CD4-positive, alpha-beta memory T cell (primary cell): ENCODE measurements at regions of chr5 and their contacts with region 1.

Region 1: GRCh38 chr5:132820162-132820754 is 7.2 kb downstream of the SOWAHA start:
- DNase-seq: peak; percentile 78 to 84 (median 81)
- H3K4me3 ChIP-seq: no peak overlapping the region
- H3K4me3 Mint-ChIP-seq: peak overlapping the region in 5 of 8 donors; percentile 6 to 69 (median 49)
- H3K27ac ChIP-seq: no peak overlapping the region
- H3K27ac Mint-ChIP-seq: peak overlapping the region in 2 of 7 donors; percentile 3 to 51
- H3K4me1 ChIP-seq: peaks cover 11% of the 10 kb centered on the region
- H3K4me1 Mint-ChIP-seq: peaks cover 2 to 14% (median 7%) of the 10 kb centered on the region in 4 donors
- H3K27me3 ChIP-seq: peaks cover 15% of the 10 kb centered on the region
- H3K27me3 Mint-ChIP-seq: peaks cover 15 to 17% of the 10 kb centered on the region in 2 donors

Region 2: GRCh38 chr5:132293066-132293991 is 526.9 kb before region 1 on chr5:
- CTCF ChIA-PET with region 1: no interaction called
- POLR2A ChIA-PET with region 1: no interaction called
- intact Hi-C with region 1: loop called (anchors 10 kb)
- DNase-seq: peak; percentile 36 to 78 (median 39)
- H3K4me3 ChIP-seq: peak overlapping the region; percentile 32 to 61
- H3K4me3 Mint-ChIP-seq: peak overlapping the region; percentile 82 to 92 (median 90)
- H3K27ac ChIP-seq: peak overlapping the region; percentile 45
- H3K27ac Mint-ChIP-seq: peak overlapping the region in 5 of 7 donors; percentile 22 to 82 (median 57)
- H3K4me1 ChIP-seq: peaks cover 18% of the 10 kb centered on the region
- H3K4me1 Mint-ChIP-seq: peaks cover 7 to 22% (median 10%) of the 10 kb centered on the region in 4 donors
- H3K27me3 ChIP-seq: no peaks in the 10 kb centered on the region
- H3K27me3 Mint-ChIP-seq: peaks cover 11 to 16% of the 10 kb centered on the region in 2 donors

Region 3: DNA sequence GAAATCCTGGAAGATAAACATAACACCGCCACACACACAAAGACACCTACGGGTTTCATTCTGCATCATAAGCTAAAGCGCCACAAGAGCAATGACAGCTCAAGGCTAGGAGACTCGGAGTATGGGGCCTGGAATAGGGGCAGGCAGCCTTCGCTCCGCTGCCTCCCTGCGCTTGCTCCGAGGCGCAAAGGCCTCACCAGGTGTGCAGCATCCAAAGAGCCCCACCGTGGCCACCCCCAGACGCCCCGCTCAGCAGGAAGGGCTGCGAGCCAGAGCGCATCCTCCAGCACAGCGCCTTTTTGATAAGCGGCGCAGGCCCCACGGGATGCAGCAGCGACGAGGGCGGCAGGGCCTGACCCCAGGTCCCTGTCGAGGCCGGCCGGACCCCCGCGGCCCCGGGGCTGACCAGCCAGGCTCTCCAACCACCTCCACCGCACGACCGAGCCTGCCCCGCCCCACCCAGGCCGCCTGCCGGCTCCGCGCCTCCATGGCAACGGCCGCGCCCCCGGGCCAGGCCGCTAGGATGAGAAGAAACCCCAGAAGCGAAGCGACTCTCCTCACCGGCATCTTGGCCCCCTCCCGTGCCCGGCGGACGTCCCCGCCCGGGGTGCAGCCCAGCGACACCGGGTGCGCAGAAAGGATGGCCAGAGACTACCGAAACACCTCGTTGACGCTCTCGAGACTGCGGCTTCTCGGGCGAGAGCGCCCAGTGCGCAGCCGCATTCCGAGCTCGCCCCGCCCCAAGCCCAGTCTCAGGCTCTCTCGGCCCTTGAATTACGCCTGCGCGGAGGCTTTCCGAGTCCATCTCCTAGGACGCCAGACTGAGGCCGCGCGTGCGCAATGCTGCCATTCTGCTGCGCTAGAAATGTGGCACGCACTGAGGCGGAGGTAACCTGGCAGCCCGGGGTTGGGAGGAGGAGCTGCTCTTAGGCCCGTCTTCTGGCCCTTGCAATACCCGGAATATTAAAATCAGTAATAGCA is 83.1 kb before region 1 on chr5 and contains the start of gene KIF3A:
- CTCF ChIA-PET with region 1: interaction called, 17 read pairs
- POLR2A ChIA-PET with region 1: interaction called, 5 read pairs
- intact Hi-C with region 1: loop called (anchors 2 kb)
- DNase-seq: peak; percentile 98
- H3K4me3 ChIP-seq: peak within 1 kb of the TSS; percentile 63 to 79
- H3K4me3 Mint-ChIP-seq: peak within 1 kb of the TSS; percentile 91 to 98 (median 94)
- H3K27ac ChIP-seq: peak within 1 kb of the TSS; percentile 68
- H3K27ac Mint-ChIP-seq: peak within 1 kb of the TSS; percentile 93 to 95 (median 94)
- H3K4me1 ChIP-seq: peaks cover 20% of the 10 kb centered on the region
- H3K4me1 Mint-ChIP-seq: peaks cover 28 to 31% (median 30%) of the 10 kb centered on the region in 4 donors
- H3K27me3 ChIP-seq: no peaks in the 10 kb centered on the region
- H3K27me3 Mint-ChIP-seq: no peaks in the 10 kb centered on the region
- total RNA-seq, gene KIF3A: 18.7 to 25.9 TPM

Region 4: GRCh38 chr5:132746954-132747615 is 73.2 kb before region 1 on chr5 and contains the start of gene CCNI2:
- CTCF ChIA-PET with region 1: interaction called, 28 read pairs
- POLR2A ChIA-PET with region 1: interaction called, 10 read pairs
- intact Hi-C with region 1: loop called (anchors 2 kb)
- DNase-seq: peak; percentile 71 to 76 (median 73)
- H3K4me3 ChIP-seq: peak within 1 kb of the TSS in 1 of 2 donors; percentile 58
- H3K4me3 Mint-ChIP-seq: peak within 1 kb of the TSS; percentile 78 to 87 (median 85)
- H3K27ac ChIP-seq: peak within 1 kb of the TSS; percentile 61
- H3K27ac Mint-ChIP-seq: peak within 1 kb of the TSS; percentile 74 to 89 (median 79)
- H3K4me1 ChIP-seq: peaks cover 7% of the 10 kb centered on the region
- H3K4me1 Mint-ChIP-seq: peaks cover 8 to 28% (median 15%) of the 10 kb centered on the region in 4 donors
- H3K27me3 ChIP-seq: no peaks in the 10 kb centered on the region
- H3K27me3 Mint-ChIP-seq: no peaks in the 10 kb centered on the region
- total RNA-seq, gene CCNI2: 12.5 to 13.0 TPM

Region 5: DNA sequence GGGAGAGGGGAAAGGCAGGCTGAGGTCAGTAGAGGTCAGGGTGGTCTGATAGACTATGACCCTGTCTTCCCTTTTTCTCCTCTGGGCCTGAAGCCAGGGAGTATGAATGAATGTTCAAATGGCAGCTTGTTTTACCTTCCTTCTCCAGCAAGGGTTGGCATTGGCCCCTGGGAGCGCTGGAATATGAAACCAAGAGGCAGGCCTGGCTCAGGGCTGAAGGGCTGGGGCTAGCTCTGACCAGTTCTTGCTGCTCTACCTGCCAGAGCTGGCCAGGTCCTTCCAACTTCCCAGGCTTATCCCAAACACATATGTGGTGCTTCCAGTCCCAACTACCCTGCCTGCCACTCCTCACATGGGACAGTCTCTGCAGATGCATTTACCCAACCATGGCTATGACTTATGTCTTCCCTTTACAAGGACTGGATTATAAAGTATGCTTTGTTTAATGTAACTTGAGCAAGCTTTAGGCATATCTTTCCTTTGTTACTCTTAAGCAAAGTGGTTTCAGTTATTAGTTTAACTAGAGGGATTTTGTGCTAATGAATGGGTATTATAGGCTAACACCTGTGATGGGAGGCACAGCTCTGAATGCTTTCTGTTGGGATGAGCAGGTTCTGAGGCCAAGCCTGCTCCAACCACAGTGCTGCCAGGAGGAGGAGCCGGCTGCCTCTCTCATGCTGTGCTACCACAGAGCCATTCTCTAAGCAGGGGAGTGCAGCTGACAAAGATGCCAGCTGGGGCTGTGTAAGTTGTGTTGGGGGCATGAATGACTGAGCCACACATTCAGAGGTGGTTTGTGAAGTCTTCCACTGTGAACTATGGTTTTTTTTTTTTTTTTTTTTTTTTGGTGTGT is 66.9 kb before region 1 on chr5:
- CTCF ChIA-PET with region 1: interaction called, 28 read pairs
- POLR2A ChIA-PET with region 1: interaction called, 10 read pairs
- intact Hi-C with region 1: no loop called
- DNase-seq: no peak
- H3K4me3 ChIP-seq: no peak overlapping the region
- H3K4me3 Mint-ChIP-seq: no peak overlapping the region
- H3K27ac ChIP-seq: no peak overlapping the region
- H3K27ac Mint-ChIP-seq: peak overlapping the region in 5 of 7 donors; percentile 49 to 85 (median 60)
- H3K4me1 ChIP-seq: peaks cover 2% of the 10 kb centered on the region
- H3K4me1 Mint-ChIP-seq: peaks cover 12 to 26% (median 15%) of the 10 kb centered on the region in 4 donors
- H3K27me3 ChIP-seq: no peaks in the 10 kb centered on the region
- H3K27me3 Mint-ChIP-seq: no peaks in the 10 kb centered on the region

Region 6: GRCh38 chr5:132797651-132798050 is 22.6 kb before region 1 on chr5:
- CTCF ChIA-PET with region 1: interaction called, 12 read pairs
- POLR2A ChIA-PET with region 1: no interaction called
- intact Hi-C with region 1: no loop called
- DNase-seq: no peak
- H3K4me3 ChIP-seq: no peak overlapping the region
- H3K4me3 Mint-ChIP-seq: no peak overlapping the region
- H3K27ac ChIP-seq: no peak overlapping the region
- H3K27ac Mint-ChIP-seq: no peak overlapping the region
- H3K4me1 ChIP-seq: no peaks in the 10 kb centered on the region
- H3K4me1 Mint-ChIP-seq: no peaks in the 10 kb centered on the region
- H3K27me3 ChIP-seq: peaks cover 6% of the 10 kb centered on the region
- H3K27me3 Mint-ChIP-seq: peaks cover 17 to 30% of the 10 kb centered on the region in 2 donors

Region 7: GRCh38 chr5:132807163-132807838 is 13.0 kb before region 1 on chr5:
- CTCF ChIA-PET with region 1: interaction called, 14 read pairs
- POLR2A ChIA-PET with region 1: no interaction called
- intact Hi-C with region 1: no loop called
- DNase-seq: no peak
- H3K4me3 ChIP-seq: no peak overlapping the region
- H3K4me3 Mint-ChIP-seq: no peak overlapping the region
- H3K27ac ChIP-seq: no peak overlapping the region
- H3K27ac Mint-ChIP-seq: peak overlapping the region in 1 of 7 donors; percentile 57
- H3K4me1 ChIP-seq: peaks cover 2% of the 10 kb centered on the region
- H3K4me1 Mint-ChIP-seq: peaks cover under 1 to 3% (median 2%) of the 10 kb centered on the region in 4 donors
- H3K27me3 ChIP-seq: peaks cover 17% of the 10 kb centered on the region
- H3K27me3 Mint-ChIP-seq: peaks cover 32 to 57% of the 10 kb centered on the region in 2 donors